ENCODE measurements at regions of chr11 and their contacts with region 1.

Region 1: DNA sequence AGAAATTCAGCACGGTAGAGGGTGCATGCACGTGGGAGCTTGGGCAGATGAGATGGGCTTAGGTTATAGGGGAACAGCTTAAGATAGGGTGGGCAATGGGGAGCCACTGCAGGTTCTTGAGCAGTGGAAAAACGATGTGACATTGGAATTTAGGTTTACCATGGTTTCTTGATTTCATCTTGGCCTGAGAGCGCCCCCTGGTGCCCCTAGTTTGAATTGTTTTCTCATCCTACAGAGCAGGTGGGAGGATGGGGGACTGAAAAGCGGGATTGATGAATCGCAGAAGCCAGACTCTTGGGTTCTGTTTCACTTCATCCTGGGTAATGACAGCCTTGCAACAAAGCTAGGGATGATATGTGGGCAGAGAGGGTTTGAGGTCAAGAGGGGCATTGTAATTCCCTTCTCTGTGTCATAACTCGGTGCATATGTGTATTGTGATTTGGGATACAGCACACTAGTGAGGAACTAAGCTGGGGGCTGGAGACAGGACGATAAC is 6.7 kb upstream of the MCAM start:
- DNase-seq: peak; percentile 37
- ATAC-seq: no peak
- H3K4me3 ChIP-seq: no peak overlapping the region
- H3K27ac ChIP-seq: no peak overlapping the region
- H3K4me1 ChIP-seq: peaks cover 27% of the 10 kb centered on the region
- H3K27me3 ChIP-seq: no peaks in the 10 kb centered on the region
- CTCF ChIP-seq: peak; percentile 73 to 86 (median 82)
- EP300 ChIP-seq: no peak
- POLR2A ChIP-seq: no peak
- RAD21 ChIP-seq: peak; percentile 79

Region 2: GRCh38 chr11:118956094-118956846 is 367.3 kb before region 1 on chr11 and contains the start of gene UPK2:
- CTCF ChIA-PET with region 1: no interaction called
- POLR2A ChIA-PET with region 1: no interaction called
- RAD21 ChIA-PET with region 1: no interaction called
- SMC1A ChIA-PET with region 1: no interaction called
- in situ Hi-C with region 1: no loop called
- intact Hi-C with region 1: no loop called
- DNase-seq: peak; percentile 19
- ATAC-seq: peak; percentile 100
- H3K4me3 ChIP-seq: no peak within 1 kb of the TSS
- H3K27ac ChIP-seq: no peak within 1 kb of the TSS
- H3K4me1 ChIP-seq: no peaks in the 10 kb centered on the region
- H3K27me3 ChIP-seq: peaks cover 0 to 9% of the 10 kb centered on the region in 2 experiments; a peak in 2 of 4 replicates
- CTCF ChIP-seq: peak; percentile 91 to 98 (median 97)
- EP300 ChIP-seq: no peak
- POLR2A ChIP-seq: no peak
- RAD21 ChIP-seq: peak; percentile 94
- polyA plus RNA-seq, gene UPK2: not detected

Region 3: DNA sequence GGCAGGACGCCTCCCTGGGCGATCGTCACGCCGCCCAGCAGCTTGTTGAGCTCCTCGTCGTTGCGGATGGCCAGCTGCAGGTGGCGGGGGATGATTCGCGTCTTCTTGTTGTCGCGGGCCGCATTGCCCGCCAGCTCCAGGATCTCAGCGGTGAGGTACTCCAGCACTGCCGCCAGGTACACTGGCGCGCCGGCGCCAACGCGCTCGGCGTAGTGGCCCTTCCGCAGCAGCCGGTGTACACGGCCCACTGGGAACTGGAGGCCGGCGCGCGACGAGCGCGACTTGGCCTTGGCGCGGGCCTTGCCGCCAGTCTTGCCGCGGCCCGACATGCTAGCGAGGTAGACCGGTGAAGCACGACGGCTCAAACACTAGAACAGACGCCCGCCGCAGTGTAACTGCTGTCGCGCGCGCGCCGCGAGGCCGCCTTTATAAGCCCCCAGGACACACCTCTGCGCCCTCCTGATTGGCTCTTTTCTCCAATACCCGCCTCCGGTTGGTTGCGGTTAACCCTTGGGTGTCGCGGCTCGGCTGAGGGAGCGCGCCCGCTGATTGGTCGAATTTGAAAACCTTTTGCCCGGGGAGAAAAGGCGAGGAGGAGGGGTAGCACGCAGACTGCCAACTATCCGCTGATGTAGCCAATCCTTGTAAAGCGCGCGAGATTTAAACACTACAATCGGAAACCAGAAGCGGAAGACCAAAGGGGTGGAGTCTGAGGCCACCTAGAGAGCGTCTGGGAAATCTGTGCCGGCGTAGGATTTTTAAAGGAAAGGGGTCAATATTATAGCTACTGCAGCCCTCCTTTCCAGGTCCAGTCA is 228.3 kb before region 1 on chr11:
- CTCF ChIA-PET with region 1: interaction called, 13 read pairs
- POLR2A ChIA-PET with region 1: interaction called, 4 read pairs
- RAD21 ChIA-PET with region 1: interaction called, 3 read pairs
- SMC1A ChIA-PET with region 1: interaction called, 3 read pairs
- in situ Hi-C with region 1: no loop called
- intact Hi-C with region 1: loop called (anchors 2 kb)
- DNase-seq: peak; percentile 99
- ATAC-seq: peak; percentile 89
- H3K4me3 ChIP-seq: peak overlapping the region; percentile 83
- H3K27ac ChIP-seq: peak overlapping the region; percentile 60
- H3K4me1 ChIP-seq: peaks cover 25% of the 10 kb centered on the region
- H3K27me3 ChIP-seq: no peaks in the 10 kb centered on the region
- CTCF ChIP-seq: peak in 1 of 3 experiments; percentile 37; a peak in 1 of 6 replicates
- EP300 ChIP-seq: 0 out of 4 replicates have a peak, but pooled peaks of 1 of the 2 experiments have one; percentile 8
- POLR2A ChIP-seq: peak; percentile 100
- RAD21 ChIP-seq: no peak

Region 4: GRCh38 chr11:119144825-119145486 is 178.6 kb before region 1 on chr11:
- CTCF ChIA-PET with region 1: interaction called, 5 read pairs
- POLR2A ChIA-PET with region 1: no interaction called
- RAD21 ChIA-PET with region 1: interaction called, 5 read pairs
- SMC1A ChIA-PET with region 1: interaction called, 4 read pairs
- in situ Hi-C with region 1: no loop called
- intact Hi-C with region 1: loop called (anchors 5 kb)
- DNase-seq: no peak
- ATAC-seq: peak; percentile 97
- H3K4me3 ChIP-seq: no peak overlapping the region
- H3K27ac ChIP-seq: no peak overlapping the region
- H3K4me1 ChIP-seq: no peaks in the 10 kb centered on the region
- H3K27me3 ChIP-seq: peaks cover 2 to 10% of the 10 kb centered on the region in 2 experiments; a peak in 3 of 4 replicates
- CTCF ChIP-seq: peak; percentile 50 to 71 (median 67)
- EP300 ChIP-seq: no peak
- POLR2A ChIP-seq: no peak
- RAD21 ChIP-seq: peak; percentile 52

Region 5: DNA sequence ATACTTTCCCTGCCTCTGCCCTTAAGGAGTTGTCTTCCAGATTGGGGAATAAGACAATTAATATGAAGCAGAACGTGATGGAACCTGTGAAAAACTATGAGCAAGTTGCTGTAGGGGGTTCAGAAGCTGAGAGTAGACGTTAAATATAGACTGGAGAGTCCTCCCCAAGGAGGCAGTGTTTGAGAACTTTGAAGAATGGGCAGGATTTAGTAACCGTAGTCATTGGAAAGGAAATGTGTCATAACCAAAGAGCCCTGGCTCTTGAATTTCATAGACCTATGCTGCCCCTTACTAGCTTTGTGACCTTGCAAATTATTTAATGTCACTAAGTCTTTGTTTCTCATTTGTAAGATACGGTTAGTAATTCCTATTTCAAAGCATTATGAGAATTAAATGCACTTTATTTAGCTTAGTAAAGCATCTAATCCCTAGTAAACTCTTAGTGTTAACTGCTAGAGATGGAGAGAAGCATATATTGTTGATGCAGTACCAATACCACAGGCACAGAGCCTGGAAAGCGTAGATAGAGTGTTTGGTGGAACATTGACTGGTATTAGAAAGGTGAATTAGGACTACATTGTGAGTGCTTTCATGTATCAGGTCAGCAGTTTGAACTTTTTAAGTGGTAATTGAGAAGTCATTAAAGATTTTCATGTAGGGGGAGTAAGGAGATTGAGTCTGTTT is 60.8 kb before region 1 on chr11:
- CTCF ChIA-PET with region 1: interaction called, 52 read pairs
- POLR2A ChIA-PET with region 1: interaction called, 7 read pairs
- RAD21 ChIA-PET with region 1: interaction called, 5 read pairs
- SMC1A ChIA-PET with region 1: interaction called, 4 read pairs
- in situ Hi-C with region 1: no loop called
- intact Hi-C with region 1: no loop called
- DNase-seq: peak; percentile 63
- ATAC-seq: peak; percentile 62
- H3K4me3 ChIP-seq: peak overlapping the region; percentile 52
- H3K27ac ChIP-seq: peak overlapping the region; percentile 83
- H3K4me1 ChIP-seq: peaks cover 47% of the 10 kb centered on the region
- H3K27me3 ChIP-seq: no peaks in the 10 kb centered on the region
- CTCF ChIP-seq: peak in 2 of 3 experiments; percentile 8 to 20; a peak in 1 of 6 replicates
- EP300 ChIP-seq: no peak
- POLR2A ChIP-seq: no peak
- RAD21 ChIP-seq: no peak

Region 6: DNA sequence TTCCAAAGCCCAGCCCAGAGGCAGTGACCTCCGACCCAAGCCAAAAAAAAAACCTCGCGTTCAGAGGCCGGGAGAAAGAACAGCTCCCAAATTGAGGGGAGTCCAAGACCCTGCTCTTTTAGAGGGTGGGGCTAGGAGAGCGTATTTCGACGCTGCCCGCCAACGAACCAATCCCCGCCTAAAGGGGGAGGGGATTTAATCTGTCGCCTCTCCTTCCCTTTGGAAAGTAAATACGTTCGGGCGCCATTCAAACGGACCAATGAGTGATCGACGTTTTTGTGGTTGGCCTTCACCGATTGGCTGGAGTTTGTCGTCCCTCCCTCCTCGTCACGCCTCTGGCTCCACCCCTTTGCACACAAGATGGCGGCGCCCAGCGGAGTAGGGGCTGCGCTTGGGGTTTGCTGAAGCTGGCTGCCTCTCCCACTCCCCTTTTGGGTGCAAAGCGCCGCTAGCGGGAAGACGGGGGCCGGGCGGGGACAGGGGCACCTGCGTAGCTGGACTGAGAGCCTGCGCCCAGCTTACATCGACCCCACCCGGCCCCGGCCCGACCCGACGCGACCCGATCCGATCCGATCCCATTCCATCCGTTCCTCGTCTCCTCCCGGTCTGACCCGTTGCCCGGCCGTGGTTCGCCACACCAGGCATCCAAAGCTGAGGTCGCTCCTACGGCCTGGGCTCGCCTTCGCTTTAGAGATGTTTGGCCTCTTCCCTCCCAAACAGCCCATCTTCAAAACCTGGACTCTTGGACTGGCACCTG is 10.8 kb after region 1 on chr11 and contains the start of gene RNF26:
- CTCF ChIA-PET with region 1: interaction called, 88 read pairs
- POLR2A ChIA-PET with region 1: interaction called, 9 read pairs
- RAD21 ChIA-PET with region 1: interaction called, 24 read pairs
- SMC1A ChIA-PET with region 1: interaction called, 23 read pairs
- in situ Hi-C with region 1: no loop called
- intact Hi-C with region 1: no loop called
- DNase-seq: peak; percentile 95
- ATAC-seq: peak; percentile 97
- H3K4me3 ChIP-seq: peak within 1 kb of the TSS; percentile 91
- H3K27ac ChIP-seq: peak within 1 kb of the TSS; percentile 85
- H3K4me1 ChIP-seq: peaks cover 12% of the 10 kb centered on the region
- H3K27me3 ChIP-seq: no peaks in the 10 kb centered on the region
- CTCF ChIP-seq: no peak
- EP300 ChIP-seq: no peak
- POLR2A ChIP-seq: peak; percentile 91
- RAD21 ChIP-seq: no peak
- polyA plus RNA-seq, gene RNF26: 2.8 to 4.2 TPM

Region 7: GRCh38 chr11:119381181-119381988 is 57.8 kb after region 1 on chr11 and contains the start of gene USP2:
- CTCF ChIA-PET with region 1: no interaction called
- POLR2A ChIA-PET with region 1: no interaction called
- RAD21 ChIA-PET with region 1: no interaction called
- SMC1A ChIA-PET with region 1: no interaction called
- in situ Hi-C with region 1: no loop called
- intact Hi-C with region 1: no loop called
- DNase-seq: peak; percentile 48
- ATAC-seq: peak; percentile 99
- H3K4me3 ChIP-seq: peak within 1 kb of the TSS; percentile 40; the same call in 1 of the 2 replicates
- H3K27ac ChIP-seq: no peak within 1 kb of the TSS
- H3K4me1 ChIP-seq: 0 out of 2 replicates have a peak, but pooled peaks cover 3% of the 10 kb centered on the region
- H3K27me3 ChIP-seq: peaks cover 0 to 8% of the 10 kb centered on the region in 2 experiments; a peak in 3 of 4 replicates
- CTCF ChIP-seq: peak; percentile 83 to 88 (median 87)
- EP300 ChIP-seq: no peak
- POLR2A ChIP-seq: no peak
- RAD21 ChIP-seq: peak; percentile 28; the same call in 1 of the 2 replicates
- polyA plus RNA-seq, gene USP2: 0.04 TPM in 1 of 2 experiments, not detected in the other

Measured in GM12878 (cell line).